Right ventricle myocardium inferior (tissue), 1 donor: ENCODE measurements at regions of chr2 and their contacts with region 1.

Region 1: DNA sequence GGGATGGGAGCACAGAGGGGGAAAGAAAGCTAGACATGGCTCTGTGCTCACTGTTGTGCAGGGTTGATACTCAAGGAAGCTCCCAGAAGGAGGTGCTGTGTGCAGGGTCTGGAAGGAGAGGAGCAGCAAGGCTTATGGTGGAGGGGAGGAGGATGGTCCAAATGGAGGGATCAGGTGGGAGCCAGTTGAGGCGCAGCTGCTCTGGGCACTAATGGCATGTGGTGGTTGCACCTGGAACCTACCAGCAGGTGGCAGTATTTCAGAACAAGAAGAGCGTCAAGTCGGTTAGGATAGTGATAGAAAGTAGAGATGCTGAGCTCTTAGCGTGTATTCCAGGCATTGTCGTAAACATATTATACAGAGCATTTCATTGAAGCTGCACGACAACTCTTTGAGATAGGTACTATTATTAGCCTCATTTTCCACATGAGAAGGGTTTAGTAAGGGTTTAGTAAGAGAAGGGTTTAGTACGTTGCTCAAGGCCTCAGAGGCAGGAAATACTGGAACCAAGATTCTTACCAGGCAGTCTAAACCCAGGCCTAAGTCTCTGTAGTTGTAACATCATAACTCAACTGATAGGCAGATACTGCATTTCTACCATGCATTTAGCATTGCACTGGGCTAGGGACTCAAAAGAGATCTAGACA is 223.7 kb downstream of the CYP26B1 start:
- DNase-seq: peak; percentile 75
- ATAC-seq: peak; percentile 74

Region 2: GRCh38 chr2:71950256-71951082 is 26.5 kb after region 1 on chr2:
- intact Hi-C with region 1: no loop called
- DNase-seq: no peak
- ATAC-seq: peak; percentile 94

Region 3: DNA sequence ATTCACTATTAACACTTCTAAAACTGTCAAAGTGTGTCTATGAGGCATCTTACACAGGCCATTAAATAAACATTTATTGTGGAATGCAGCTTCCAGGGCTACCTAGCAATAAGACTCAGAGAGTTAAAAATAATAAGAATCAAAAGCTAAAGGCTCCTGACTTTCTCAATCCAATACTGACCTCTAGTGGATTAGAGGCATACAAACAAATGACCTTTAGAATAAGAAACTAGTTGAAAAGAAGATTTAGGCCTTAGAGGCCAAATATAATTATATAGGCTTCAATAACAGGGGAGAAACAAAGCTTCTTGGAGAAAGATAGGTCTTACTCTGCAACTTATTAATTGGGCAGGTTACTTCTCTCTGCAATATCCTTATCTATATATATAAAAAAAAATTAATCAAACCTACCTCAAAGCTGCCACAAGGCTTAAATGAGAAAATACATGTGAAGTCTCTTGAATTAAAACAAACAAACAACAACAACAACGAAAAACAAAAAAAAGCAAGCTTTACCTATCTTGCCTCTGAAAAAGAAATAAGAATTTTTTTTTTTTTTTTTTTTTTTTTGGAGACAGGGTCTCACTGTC is 655.7 kb after region 1 on chr2:
- intact Hi-C with region 1: loop called (anchors 10 kb)
- DNase-seq: no peak
- ATAC-seq: no peak